ENCODE measurements at regions of chr9 and their contacts with region 1.

Region 1: GRCh38 chr9:4366591-4367330 is 66.9 kb upstream of the GLIS3 start:
- DNase-seq: peak; percentile 66 to 68
- H3K4me3 ChIP-seq: no peak overlapping the region
- H3K4me1 ChIP-seq: no peaks in the 10 kb centered on the region
- H3K27me3 ChIP-seq: no peaks in the 10 kb centered on the region

Region 2: GRCh38 chr9:3240656-3241268 is 1126.0 kb before region 1 on chr9:
- in situ Hi-C with region 1: loop called (anchors 25 kb)
- DNase-seq: peak; percentile 72 to 78
- H3K4me3 ChIP-seq: no peak overlapping the region
- H3K4me1 ChIP-seq: no peaks in the 10 kb centered on the region; the same call in 1 of the 2 replicates
- H3K27me3 ChIP-seq: no peaks in the 10 kb centered on the region

Region 3: DNA sequence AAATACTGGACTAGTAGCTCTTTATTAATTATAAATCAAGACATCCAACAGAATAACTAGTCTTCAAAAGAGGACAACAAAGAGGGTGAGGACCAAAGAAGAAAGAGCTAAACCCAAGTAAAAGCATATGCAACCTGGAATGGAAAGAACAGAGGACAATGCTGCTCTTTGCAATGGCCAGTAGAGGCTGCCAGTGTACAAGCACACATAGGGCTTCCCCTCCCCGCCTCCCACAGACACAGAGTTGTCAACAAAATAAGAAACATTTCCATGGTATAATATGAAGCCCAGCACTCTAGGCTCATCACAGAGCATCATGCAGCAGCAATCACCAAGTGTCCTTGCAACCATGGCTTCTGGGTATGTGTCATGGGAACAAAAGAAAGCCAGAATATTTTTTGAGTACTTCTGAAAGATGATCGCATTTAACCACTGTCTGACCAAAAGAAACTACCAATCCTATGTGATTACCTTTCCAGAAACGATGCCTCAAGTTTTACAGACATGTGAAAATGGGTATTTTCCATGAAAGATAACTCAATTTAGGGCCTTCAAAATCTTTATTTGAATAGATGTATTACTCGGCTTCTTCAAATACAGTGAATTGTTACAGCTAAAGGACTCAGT is 899.1 kb before region 1 on chr9:
- in situ Hi-C with region 1: loop called (anchors 25 kb)
- DNase-seq: peak; percentile 80 to 86
- H3K4me3 ChIP-seq: no peak overlapping the region
- H3K4me1 ChIP-seq: peaks cover 28% of the 10 kb centered on the region
- H3K27me3 ChIP-seq: no peaks in the 10 kb centered on the region

Measured in HAP-1 (cell line).